ENCODE measurements at regions of chr11 and their contacts with region 1.

Region 1: GRCh38 chr11:31397239-31397834 is 27.7 kb downstream of the DNAJC24 start:
- DNase-seq: peak in 3 of 4 experiments; percentile 7 to 30 (median 23)
- ATAC-seq: peak; percentile 67
- H3K4me3 ChIP-seq: no peak overlapping the region
- H3K27ac ChIP-seq: no peak overlapping the region
- H3K4me1 ChIP-seq: no peaks in the 10 kb centered on the region
- H3K27me3 ChIP-seq: no peaks in the 10 kb centered on the region
- CTCF ChIP-seq: peak in 2 of 3 experiments; percentile 45 to 78; a peak in 3 of 6 replicates
- EP300 ChIP-seq: no peak
- POLR2A ChIP-seq: no peak
- RAD21 ChIP-seq: peak; percentile 69 to 76

Region 2: GRCh38 chr11:31295308-31295707 is 102.0 kb before region 1 on chr11:
- CTCF ChIA-PET with region 1: no interaction called
- POLR2A ChIA-PET with region 1: no interaction called
- in situ Hi-C with region 1: no loop called
- intact Hi-C with region 1: no loop called
- DNase-seq: no peak
- ATAC-seq: no peak
- H3K4me3 ChIP-seq: no peak overlapping the region
- H3K27ac ChIP-seq: no peak overlapping the region
- H3K4me1 ChIP-seq: no peaks in the 10 kb centered on the region
- H3K27me3 ChIP-seq: no peaks in the 10 kb centered on the region
- CTCF ChIP-seq: no peak
- EP300 ChIP-seq: no peak
- POLR2A ChIP-seq: no peak
- RAD21 ChIP-seq: no peak

Region 3: DNA sequence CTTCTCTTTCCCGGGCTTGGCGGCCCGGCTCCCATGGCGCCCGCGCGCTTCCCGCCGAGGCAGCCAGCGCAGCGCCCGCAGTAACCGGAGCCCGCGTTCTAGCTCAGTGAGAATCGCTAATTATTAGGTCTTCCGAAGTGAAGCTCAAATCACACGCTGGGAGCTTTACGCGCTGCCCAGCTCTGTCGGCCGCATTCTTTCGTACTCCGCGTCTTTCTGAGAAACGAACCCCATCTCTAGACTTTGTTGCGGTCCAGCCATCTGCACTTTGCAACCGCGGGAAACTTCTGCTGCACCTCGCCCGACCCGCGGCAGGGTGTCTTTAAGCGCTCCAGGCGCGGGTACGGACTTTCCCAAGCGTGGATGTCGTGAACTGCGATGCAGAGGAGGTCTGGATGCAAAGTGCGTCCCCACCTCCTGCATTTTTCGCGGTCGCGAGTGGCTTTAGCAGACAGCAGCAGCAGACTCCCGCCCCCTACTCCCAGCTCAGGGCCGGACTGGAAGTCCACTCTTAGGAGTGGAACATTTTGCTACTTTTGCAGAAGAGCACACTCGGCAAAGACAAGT is 419.8 kb after region 1 on chr11:
- CTCF ChIA-PET with region 1: no interaction called
- POLR2A ChIA-PET with region 1: no interaction called
- in situ Hi-C with region 1: no loop called
- intact Hi-C with region 1: loop called (anchors 5 kb)
- DNase-seq: peak in 2 of 4 experiments; percentile 14 to 19
- ATAC-seq: peak; percentile 33
- H3K4me3 ChIP-seq: peak overlapping the region; percentile 34
- H3K27ac ChIP-seq: no peak overlapping the region
- H3K4me1 ChIP-seq: peaks cover 0 to 52% of the 10 kb centered on the region in 2 experiments; a peak in 3 of 5 replicates
- H3K27me3 ChIP-seq: peaks cover 28 to 68% of the 10 kb centered on the region in 2 experiments
- CTCF ChIP-seq: no peak
- EP300 ChIP-seq: no peak
- POLR2A ChIP-seq: no peak
- RAD21 ChIP-seq: no peak

Region 4: GRCh38 chr11:31887180-31887579 is 489.8 kb after region 1 on chr11:
- CTCF ChIA-PET with region 1: no interaction called
- POLR2A ChIA-PET with region 1: interaction called, 3 read pairs
- in situ Hi-C with region 1: no loop called
- intact Hi-C with region 1: loop called (anchors 5 kb)
- DNase-seq: peak; percentile 47 to 54 (median 51)
- ATAC-seq: peak; percentile 87
- H3K4me3 ChIP-seq: no peak overlapping the region
- H3K27ac ChIP-seq: no peak overlapping the region
- H3K4me1 ChIP-seq: no peaks in the 10 kb centered on the region
- H3K27me3 ChIP-seq: peaks cover 3 to 8% of the 10 kb centered on the region in 2 experiments; a peak in 4 of 5 replicates
- CTCF ChIP-seq: peak; percentile 49 to 55 (median 50)
- EP300 ChIP-seq: no peak
- POLR2A ChIP-seq: no peak
- RAD21 ChIP-seq: peak in 1 of 2 experiments; percentile 50; a peak in 2 of 4 replicates

Region 5: DNA sequence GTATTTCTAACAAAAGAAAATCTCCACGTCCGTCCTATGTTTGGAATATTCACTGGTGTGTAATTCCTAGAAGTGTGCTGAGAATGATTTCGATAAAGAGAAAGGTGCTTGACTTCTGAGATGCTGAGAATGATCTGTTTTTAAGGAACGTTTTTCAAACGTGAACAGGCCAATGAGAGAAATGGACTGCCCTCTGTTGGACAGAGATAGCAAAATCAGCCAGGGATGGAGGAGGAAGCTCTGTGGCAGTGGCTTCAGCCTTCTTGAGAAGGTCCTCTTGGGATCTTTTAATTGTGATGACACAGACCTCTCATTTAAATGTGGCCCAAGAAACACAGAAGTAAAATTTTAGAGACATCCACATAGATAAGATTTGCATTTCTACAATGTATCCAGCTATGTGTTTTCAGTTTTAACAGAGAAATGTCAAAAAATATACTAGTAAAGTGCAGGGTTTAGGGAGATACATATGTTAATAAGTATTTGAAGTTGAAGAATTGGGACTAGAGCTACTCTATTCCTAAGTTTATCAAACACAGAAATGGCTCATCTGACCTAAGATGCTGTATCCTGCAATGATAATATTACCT is 609.6 kb after region 1 on chr11:
- CTCF ChIA-PET with region 1: no interaction called
- POLR2A ChIA-PET with region 1: no interaction called
- in situ Hi-C with region 1: no loop called
- intact Hi-C with region 1: loop called (anchors 5 kb)
- DNase-seq: peak; percentile 44 to 49 (median 46)
- ATAC-seq: peak; percentile 88
- H3K4me3 ChIP-seq: no peak overlapping the region
- H3K27ac ChIP-seq: no peak overlapping the region
- H3K4me1 ChIP-seq: no peaks in the 10 kb centered on the region
- H3K27me3 ChIP-seq: peaks cover 0 to 17% of the 10 kb centered on the region in 2 experiments; a peak in 2 of 5 replicates
- CTCF ChIP-seq: peak; percentile 42 to 63 (median 61); a peak in 5 of 6 replicates
- EP300 ChIP-seq: no peak
- POLR2A ChIP-seq: no peak
- RAD21 ChIP-seq: peak; percentile 47 to 57